ENCODE measurements at regions of chr13 and their contacts with region 1.

Region 1: GRCh38 chr13:91348906-91349435 is 1.5 kb downstream of the MIR17HG start:
- DNase-seq: peak; percentile 93
- H3K4me3 Mint-ChIP-seq: peak overlapping the region; percentile 98
- H3K27ac Mint-ChIP-seq: peak overlapping the region; percentile 94
- H3K4me1 Mint-ChIP-seq: peaks cover 54% of the 10 kb centered on the region
- H3K27me3 Mint-ChIP-seq: no peaks in the 10 kb centered on the region

Region 2: DNA sequence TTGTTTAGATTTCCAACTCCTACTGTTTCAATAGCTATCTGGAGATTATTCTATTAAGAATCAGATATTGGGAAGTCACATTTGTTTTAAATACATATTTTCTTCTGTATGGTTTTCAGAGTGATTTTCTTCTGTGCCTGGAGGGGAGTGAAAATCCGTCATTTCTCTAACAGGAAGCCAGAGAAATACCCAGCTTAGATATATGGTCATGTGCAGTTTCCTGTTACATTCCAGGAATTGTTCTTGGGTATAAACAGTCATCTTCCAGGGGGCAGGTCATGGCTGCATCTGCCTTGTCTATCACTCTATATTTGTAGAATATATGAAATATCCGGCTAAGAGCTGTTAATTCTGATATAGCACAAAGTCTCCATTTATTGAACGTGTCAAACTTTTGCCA is 78.9 kb before region 1 on chr13:
- CTCF ChIA-PET with region 1: no interaction called
- POLR2A ChIA-PET with region 1: no interaction called
- intact Hi-C with region 1: no loop called
- DNase-seq: no peak
- H3K4me3 Mint-ChIP-seq: no peak overlapping the region
- H3K27ac Mint-ChIP-seq: no peak overlapping the region
- H3K4me1 Mint-ChIP-seq: no peaks in the 10 kb centered on the region
- H3K27me3 Mint-ChIP-seq: peaks cover 4% of the 10 kb centered on the region

Region 3: DNA sequence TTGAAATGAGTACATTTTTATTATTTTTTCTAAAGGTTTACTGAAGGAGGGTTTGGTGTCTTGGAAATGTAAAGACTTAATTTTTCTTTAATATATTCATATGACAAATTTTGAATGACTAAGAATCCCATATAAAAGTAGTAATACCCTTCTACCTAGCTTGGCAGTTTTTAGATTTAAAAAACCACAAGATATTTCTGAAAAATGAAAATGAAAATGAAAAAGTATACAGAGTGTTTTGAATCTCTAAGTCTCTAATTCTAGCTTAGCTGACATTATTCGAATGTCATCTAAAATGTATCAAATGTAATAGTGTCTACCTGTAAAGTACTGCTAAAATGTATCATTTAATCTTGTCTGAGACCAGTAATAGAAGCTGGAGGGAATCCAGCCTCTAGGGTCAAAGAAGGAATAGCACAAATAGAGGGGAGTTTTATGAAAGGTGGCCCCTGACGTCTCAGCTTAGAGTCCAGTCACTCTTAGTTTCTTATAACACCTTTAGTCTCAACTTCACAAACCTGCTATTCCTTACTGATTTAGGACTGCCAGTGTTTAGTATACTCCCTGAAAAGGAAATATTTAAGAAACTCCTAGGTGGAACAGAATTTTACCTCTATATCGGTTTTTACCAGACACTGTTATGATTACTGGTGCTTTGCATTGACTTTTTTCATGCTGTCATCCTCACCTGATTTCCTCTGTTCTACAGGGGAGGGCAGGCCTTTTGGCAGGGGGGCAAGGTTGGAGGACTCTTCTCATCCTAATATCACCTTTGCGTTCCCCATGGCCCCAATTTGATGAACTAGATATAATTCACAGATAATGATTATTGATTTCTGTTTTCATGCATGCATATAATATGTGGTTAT is 17.7 kb before region 1 on chr13:
- CTCF ChIA-PET with region 1: interaction called, 3 read pairs
- POLR2A ChIA-PET with region 1: interaction called, 12 read pairs
- intact Hi-C with region 1: loop called (anchors 1 kb)
- DNase-seq: no peak
- H3K4me3 Mint-ChIP-seq: peak overlapping the region; percentile 43
- H3K27ac Mint-ChIP-seq: peak overlapping the region; percentile 67
- H3K4me1 Mint-ChIP-seq: peaks cover 18% of the 10 kb centered on the region
- H3K27me3 Mint-ChIP-seq: peaks cover 2% of the 10 kb centered on the region

Region 4: GRCh38 chr13:91369441-91369831 is 20.5 kb after region 1 on chr13:
- CTCF ChIA-PET with region 1: interaction called, 3 read pairs
- POLR2A ChIA-PET with region 1: interaction called, 5 read pairs
- intact Hi-C with region 1: loop called (anchors 1 kb)
- DNase-seq: peak; percentile 59
- H3K4me3 Mint-ChIP-seq: no peak overlapping the region
- H3K27ac Mint-ChIP-seq: no peak overlapping the region
- H3K4me1 Mint-ChIP-seq: peaks cover 27% of the 10 kb centered on the region
- H3K27me3 Mint-ChIP-seq: peaks cover 2% of the 10 kb centered on the region

Region 5: DNA sequence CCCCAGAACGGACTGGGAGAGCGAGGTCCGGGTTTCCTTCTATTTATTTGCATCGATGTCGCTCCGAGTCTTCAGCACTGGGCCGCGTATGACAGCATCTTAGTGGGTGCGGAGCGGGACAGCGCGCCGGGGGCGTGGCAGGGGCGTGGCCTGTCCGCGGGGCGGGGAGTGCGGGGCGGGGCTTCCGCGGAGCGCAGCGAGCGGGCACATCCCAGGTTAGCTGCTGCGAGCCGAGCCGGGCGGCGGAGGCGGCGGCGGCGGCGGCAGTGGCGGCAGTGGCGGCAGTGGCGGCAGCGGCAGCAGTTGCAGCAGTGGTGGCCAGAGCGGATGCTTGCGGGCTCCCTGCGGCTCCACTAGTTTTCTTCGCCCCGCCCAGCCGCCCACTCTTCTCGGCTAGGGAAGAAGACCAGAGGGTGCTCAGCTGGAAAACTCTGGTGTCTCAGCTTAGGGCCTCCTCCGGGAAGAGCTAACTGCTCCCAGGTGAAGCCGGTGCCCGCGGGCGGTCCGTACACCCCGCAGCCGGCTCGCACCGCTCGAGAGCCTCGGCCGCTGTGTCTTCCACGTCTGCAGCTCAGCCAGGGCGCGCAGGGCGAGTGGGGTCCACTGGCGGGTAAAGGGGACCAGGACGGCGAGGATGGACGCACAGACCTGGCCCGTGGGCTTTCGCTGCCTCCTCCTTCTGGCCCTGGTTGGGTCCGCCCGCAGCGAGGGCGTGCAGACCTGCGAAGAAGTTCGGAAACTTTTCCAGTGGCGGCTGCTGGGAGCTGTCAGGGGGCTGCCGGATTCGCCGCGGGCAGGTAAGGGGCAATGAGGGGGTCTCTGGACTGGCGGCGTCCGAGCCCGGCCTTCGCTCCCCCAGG is 49.7 kb after region 1 on chr13 and contains the start of gene GPC5:
- CTCF ChIA-PET with region 1: no interaction called
- POLR2A ChIA-PET with region 1: interaction called, 5 read pairs
- intact Hi-C with region 1: loop called (anchors 1 kb)
- DNase-seq: peak; percentile 91
- H3K4me3 Mint-ChIP-seq: peak within 1 kb of the TSS; percentile 69
- H3K27ac Mint-ChIP-seq: peak within 1 kb of the TSS; percentile 21
- H3K4me1 Mint-ChIP-seq: peaks cover 9% of the 10 kb centered on the region
- H3K27me3 Mint-ChIP-seq: peaks cover 44% of the 10 kb centered on the region
- total RNA-seq, gene GPC5: 0.17 to 0.29 TPM

Region 6: DNA sequence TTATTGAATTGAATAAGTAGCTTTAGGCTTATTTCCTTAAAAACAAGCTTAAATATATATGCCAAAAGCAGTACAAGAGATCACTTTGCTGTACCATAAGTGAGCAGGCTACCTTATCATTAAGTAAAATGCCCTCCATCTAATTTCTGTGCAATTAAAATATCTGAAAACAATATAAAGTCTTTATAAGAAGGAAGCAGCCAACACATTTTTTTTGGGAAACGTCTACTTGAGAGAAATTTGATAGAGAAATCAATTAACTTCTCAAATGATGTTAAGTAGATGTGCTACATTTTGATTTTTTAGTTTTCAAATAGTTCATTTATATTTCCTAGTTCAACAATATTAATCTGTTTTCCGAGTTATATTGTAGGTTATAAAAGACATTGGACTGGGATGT is 101.9 kb after region 1 on chr13:
- CTCF ChIA-PET with region 1: no interaction called
- POLR2A ChIA-PET with region 1: no interaction called
- intact Hi-C with region 1: no loop called
- DNase-seq: no peak
- H3K4me3 Mint-ChIP-seq: no peak overlapping the region
- H3K27ac Mint-ChIP-seq: no peak overlapping the region
- H3K4me1 Mint-ChIP-seq: no peaks in the 10 kb centered on the region
- H3K27me3 Mint-ChIP-seq: peaks cover 5% of the 10 kb centered on the region